SK-N-SH (cell line): ENCODE measurements at regions of chr3 and their contacts with region 1.

Region 1: GRCh38 chr3:127690823-127691452 is 18.2 kb downstream of the ABTB1 start:
- DNase-seq: peak; percentile 73
- H3K4me3 ChIP-seq: no peak overlapping the region; a peak in 1 of 4 replicates
- H3K27ac ChIP-seq: peak overlapping the region; percentile 60 to 68
- H3K4me1 ChIP-seq: peaks cover 15 to 51% of the 10 kb centered on the region in 2 experiments; a peak in 3 of 4 replicates
- H3K27me3 ChIP-seq: no peaks in the 10 kb centered on the region
- CTCF ChIP-seq: peak; percentile 64
- EP300 ChIP-seq: no peak
- RAD21 ChIP-seq: peak; percentile 83

Region 2: DNA sequence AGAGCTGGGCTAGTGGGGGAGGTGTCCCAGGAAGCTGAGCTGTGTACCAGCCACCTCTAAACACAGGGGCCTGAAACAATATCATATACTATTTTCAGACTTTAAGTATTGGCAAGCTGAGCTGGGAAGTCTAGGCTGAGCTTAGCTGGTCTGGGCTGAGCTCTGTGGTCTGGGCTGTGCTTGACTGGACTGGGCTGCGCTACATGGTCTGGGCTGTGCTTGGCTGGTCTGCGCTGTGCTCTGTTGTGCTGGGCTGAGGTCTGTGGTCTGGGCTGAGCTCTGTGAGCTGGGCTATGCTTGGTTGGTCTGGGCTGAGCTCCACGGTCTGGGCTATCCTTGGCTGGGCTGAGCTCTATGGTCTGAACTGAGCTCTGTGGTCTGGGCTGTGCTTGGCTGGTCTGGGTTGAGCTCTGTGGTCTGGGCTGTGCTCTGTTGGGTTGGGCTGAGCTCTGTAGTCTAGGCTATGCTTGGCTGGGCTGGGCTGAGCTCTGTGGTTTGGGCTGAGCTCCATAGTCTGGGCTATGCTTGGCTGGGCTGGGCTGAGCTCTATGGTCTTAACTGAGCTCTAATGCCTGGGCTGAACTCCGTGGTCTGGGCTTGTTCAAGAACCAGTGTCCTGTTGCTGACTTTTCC is 616.1 kb before region 1 on chr3:
- CTCF ChIA-PET with region 1: no interaction called
- POLR2A ChIA-PET with region 1: no interaction called
- DNase-seq: peak; percentile 61
- H3K4me3 ChIP-seq: no peak overlapping the region
- H3K27ac ChIP-seq: peak overlapping the region; percentile 30 to 32; a peak in 3 of 4 replicates
- H3K4me1 ChIP-seq: peaks cover 0 to 43% of the 10 kb centered on the region in 2 experiments; a peak in 2 of 4 replicates
- H3K27me3 ChIP-seq: no peaks in the 10 kb centered on the region
- CTCF ChIP-seq: no peak
- EP300 ChIP-seq: no peak
- RAD21 ChIP-seq: no peak

Region 3: GRCh38 chr3:127556565-127556964 is 134.4 kb before region 1 on chr3:
- CTCF ChIA-PET with region 1: no interaction called
- POLR2A ChIA-PET with region 1: no interaction called
- DNase-seq: no peak
- H3K4me3 ChIP-seq: no peak overlapping the region
- H3K27ac ChIP-seq: no peak overlapping the region
- H3K4me1 ChIP-seq: peaks cover 0 to 13% of the 10 kb centered on the region in 2 experiments; a peak in 2 of 4 replicates
- H3K27me3 ChIP-seq: no peaks in the 10 kb centered on the region
- CTCF ChIP-seq: peak; percentile 32
- EP300 ChIP-seq: no peak
- RAD21 ChIP-seq: 0 out of 2 replicates have a peak, but pooled peaks have one; percentile 8

Region 4: DNA sequence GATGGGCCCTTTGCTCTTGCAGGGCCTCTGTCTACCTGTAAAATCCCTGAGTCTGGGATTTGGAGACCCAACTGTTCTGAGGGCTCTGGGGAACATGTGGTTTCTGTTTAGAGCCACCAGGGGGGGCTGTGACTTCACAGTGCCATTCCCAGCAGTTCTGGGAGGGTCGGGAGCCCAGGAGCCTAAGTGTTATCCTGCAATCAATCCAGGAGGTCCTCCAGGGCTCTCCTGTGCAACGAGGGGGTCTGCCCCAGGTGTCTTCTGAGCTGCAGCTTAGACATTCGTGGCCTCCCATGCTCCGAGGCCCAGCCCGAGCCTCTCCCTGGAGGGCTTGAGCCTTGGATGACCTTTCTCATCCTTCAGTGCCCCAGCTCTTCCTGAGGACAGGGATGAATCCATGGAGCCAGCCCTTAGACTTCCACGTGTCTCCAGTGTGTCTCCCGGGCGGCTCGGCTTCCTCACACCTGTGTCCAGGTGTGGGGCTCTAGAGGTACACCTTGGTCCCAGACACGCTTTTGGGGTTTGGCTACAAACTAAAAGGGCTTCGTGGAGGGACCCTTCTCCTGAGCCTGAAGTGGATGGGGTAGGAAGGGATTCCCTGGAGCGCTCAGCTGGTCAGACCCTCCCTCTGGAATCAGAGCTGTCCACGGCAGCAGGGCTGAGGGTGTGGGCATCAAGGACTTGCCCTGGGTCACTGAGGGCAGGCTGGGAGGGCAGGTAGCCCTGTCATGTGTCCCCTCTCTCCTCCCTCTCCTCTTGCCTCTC is 38.5 kb before region 1 on chr3:
- CTCF ChIA-PET with region 1: interaction called, 24 read pairs
- POLR2A ChIA-PET with region 1: no interaction called
- DNase-seq: peak; percentile 79
- H3K4me3 ChIP-seq: no peak overlapping the region; a peak in 1 of 4 replicates
- H3K27ac ChIP-seq: no peak overlapping the region
- H3K4me1 ChIP-seq: peaks cover 0 to 8% of the 10 kb centered on the region in 2 experiments; a peak in 2 of 4 replicates
- H3K27me3 ChIP-seq: no peaks in the 10 kb centered on the region
- CTCF ChIP-seq: peak; percentile 89
- EP300 ChIP-seq: no peak
- RAD21 ChIP-seq: peak; percentile 88

Region 5: GRCh38 chr3:127822698-127823425 is 131.9 kb after region 1 on chr3:
- CTCF ChIA-PET with region 1: interaction called, 27 read pairs
- POLR2A ChIA-PET with region 1: interaction called, 3 read pairs
- DNase-seq: peak; percentile 84
- H3K4me3 ChIP-seq: peak overlapping the region; percentile 63 to 79
- H3K27ac ChIP-seq: peak overlapping the region in 1 of 2 experiments; percentile 40; a peak in 1 of 4 replicates
- H3K4me1 ChIP-seq: peaks cover 13 to 16% of the 10 kb centered on the region in 2 experiments; a peak in 2 of 4 replicates
- H3K27me3 ChIP-seq: no peaks in the 10 kb centered on the region
- CTCF ChIP-seq: no peak
- EP300 ChIP-seq: no peak
- RAD21 ChIP-seq: peak; percentile 43

Region 6: DNA sequence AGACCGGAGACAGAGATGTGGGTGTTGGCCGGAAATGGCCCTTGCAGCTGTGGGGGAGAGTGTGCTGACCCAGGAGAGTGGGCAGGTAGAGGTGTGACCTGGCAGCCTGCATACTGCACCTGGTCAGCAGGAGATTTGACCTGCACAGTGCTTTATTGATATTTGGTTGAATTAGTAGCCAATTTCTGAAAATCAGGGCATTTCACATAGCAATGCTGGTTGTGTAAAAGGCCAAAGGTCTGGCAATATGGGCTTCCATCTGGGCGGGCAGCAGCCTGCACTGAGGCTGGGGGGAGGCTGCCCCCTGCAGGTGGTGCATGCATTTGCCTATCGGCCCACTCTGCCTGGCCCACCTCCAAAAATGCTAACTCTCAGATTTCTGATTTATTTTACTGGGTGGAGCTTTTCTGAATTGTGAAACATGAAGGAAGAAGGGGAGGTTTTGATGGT is 140.8 kb after region 1 on chr3:
- CTCF ChIA-PET with region 1: interaction called, 19 read pairs
- POLR2A ChIA-PET with region 1: no interaction called
- DNase-seq: peak; percentile 67
- H3K4me3 ChIP-seq: no peak overlapping the region
- H3K27ac ChIP-seq: no peak overlapping the region
- H3K4me1 ChIP-seq: no peaks in the 10 kb centered on the region
- H3K27me3 ChIP-seq: no peaks in the 10 kb centered on the region
- CTCF ChIP-seq: peak; percentile 49
- EP300 ChIP-seq: no peak
- RAD21 ChIP-seq: peak; percentile 73

Region 7: DNA sequence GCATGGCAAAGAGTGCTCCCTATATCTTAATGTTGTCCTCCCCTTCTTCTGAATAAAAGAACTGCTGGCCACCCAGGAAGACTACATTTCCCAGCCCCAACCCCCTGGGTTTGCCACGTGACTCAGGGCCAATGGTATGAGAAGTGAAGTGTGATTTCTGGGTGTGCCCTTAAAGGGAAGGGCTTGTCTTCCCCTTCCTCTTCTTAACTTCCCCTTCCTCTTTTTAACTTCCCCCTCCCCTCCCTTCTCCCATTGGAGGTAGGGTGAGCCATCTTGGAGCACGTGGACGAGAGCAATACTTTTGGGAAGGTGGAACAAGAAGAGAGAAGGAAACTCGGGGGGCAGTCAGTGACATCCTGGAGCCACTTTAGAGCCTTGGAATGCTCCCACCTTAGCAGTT is 217.3 kb after region 1 on chr3:
- CTCF ChIA-PET with region 1: no interaction called
- POLR2A ChIA-PET with region 1: no interaction called
- DNase-seq: no peak
- H3K4me3 ChIP-seq: no peak overlapping the region
- H3K27ac ChIP-seq: no peak overlapping the region
- H3K4me1 ChIP-seq: no peaks in the 10 kb centered on the region; a peak in 1 of 4 replicates
- H3K27me3 ChIP-seq: 0 out of 2 replicates have a peak, but pooled peaks cover 5% of the 10 kb centered on the region
- CTCF ChIP-seq: no peak
- EP300 ChIP-seq: no peak
- RAD21 ChIP-seq: no peak

Region 8: GRCh38 chr3:127970966-127971592 is 280.1 kb after region 1 on chr3:
- CTCF ChIA-PET with region 1: interaction called, 29 read pairs
- POLR2A ChIA-PET with region 1: no interaction called
- DNase-seq: peak; percentile 51
- H3K4me3 ChIP-seq: peak overlapping the region in 1 of 2 experiments; percentile 33; a peak in 1 of 4 replicates
- H3K27ac ChIP-seq: no peak overlapping the region
- H3K4me1 ChIP-seq: peaks cover 0 to 9% of the 10 kb centered on the region in 2 experiments; a peak in 2 of 4 replicates
- H3K27me3 ChIP-seq: peaks cover 6% of the 10 kb centered on the region; the same call in 1 of the 2 replicates
- CTCF ChIP-seq: peak; percentile 73
- EP300 ChIP-seq: no peak
- RAD21 ChIP-seq: peak; percentile 91